ENCODE measurements at regions of chr1 and their contacts with region 1.

Region 1: GRCh38 chr1:92485381-92486257 is 1.1 kb downstream of the GFI1 start:
- DNase-seq: peak; percentile 91
- H3K4me3 Mint-ChIP-seq: peak overlapping the region; percentile 90
- H3K27ac Mint-ChIP-seq: peak overlapping the region; percentile 93
- H3K4me1 Mint-ChIP-seq: peaks cover 38% of the 10 kb centered on the region
- H3K27me3 Mint-ChIP-seq: no peaks in the 10 kb centered on the region

Region 2: DNA sequence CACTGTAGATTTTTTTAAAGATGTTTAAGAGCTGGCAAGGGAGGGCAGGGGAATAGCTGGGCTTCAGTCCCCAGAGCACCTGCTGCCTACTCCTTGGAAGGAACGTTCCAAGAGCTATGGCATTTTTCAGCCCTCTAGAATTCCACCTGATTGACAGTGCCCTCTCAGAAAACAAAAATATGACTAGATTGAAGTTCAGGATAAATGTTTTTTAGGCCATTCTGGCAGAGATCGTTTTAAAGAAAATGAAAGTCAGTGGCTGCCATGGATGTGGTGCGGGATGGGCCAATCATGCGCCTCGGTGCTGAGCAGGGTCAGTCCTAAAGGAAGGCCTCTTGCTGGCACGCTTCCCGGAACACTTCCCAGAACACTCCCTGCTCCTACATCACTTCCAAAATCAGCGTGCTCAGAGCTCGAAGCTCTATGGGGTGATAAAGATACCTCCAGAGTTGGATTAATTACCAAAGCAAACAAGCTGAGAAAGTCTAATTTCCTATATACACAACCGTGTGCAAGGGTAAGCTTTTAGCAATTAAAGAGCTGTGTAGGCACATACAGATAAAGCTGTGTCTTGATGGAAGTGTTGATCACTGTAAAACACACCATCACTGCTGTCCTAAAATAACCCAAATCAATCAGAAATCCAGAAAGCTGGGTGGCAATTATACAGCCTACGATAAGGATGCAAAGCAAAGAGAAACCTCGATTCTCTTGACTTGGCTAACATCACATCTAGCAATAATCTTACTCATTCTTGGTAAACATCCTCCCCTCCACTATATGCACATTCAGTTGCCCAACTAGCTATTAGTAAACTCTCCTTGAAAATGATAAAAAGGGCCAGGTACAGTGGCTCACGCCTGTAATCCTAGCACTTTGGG is 634.2 kb before region 1 on chr1:
- CTCF ChIA-PET with region 1: no interaction called
- intact Hi-C with region 1: no loop called
- DNase-seq: no peak
- H3K4me3 Mint-ChIP-seq: no peak overlapping the region
- H3K27ac Mint-ChIP-seq: no peak overlapping the region
- H3K4me1 Mint-ChIP-seq: peaks cover 6% of the 10 kb centered on the region
- H3K27me3 Mint-ChIP-seq: no peaks in the 10 kb centered on the region

Region 3: DNA sequence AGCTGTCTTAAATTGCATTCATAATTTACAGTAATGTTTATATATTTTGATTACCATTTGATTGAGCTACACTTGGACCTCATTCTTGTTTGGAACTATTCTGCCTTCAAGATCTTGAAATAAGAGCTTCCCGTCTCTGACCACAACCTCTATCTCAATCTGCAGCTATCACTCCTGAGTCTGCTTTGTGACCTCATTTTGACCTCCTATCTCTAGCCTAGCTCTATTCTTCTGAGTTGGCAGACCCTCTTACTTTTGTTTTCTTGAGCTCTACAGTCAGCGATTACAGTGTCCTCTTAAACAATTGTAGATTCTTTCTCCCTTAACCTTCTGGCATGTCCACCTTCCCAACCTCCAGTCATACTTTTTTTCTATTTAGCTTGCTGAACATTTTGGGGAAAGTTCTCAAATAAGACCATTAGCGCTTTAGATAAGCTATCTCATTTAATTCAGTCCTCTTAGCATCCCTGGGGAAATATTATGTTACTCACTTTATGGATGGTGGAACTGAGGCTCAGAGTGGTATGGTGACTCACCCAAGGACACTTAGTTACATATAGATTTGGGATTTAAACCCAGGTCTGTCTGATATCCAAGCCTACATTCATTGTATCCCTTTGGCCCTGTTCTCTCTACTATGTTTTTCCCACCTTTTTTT is 167.7 kb before region 1 on chr1:
- CTCF ChIA-PET with region 1: interaction called, 7 read pairs
- intact Hi-C with region 1: loop called (anchors 2 kb)
- DNase-seq: no peak
- H3K4me3 Mint-ChIP-seq: no peak overlapping the region
- H3K27ac Mint-ChIP-seq: no peak overlapping the region
- H3K4me1 Mint-ChIP-seq: peaks cover 55% of the 10 kb centered on the region
- H3K27me3 Mint-ChIP-seq: no peaks in the 10 kb centered on the region

Region 4: GRCh38 chr1:92502247-92502646 is 16.6 kb after region 1 on chr1:
- CTCF ChIA-PET with region 1: interaction called, 4 read pairs
- intact Hi-C with region 1: loop called (anchors 1 kb)
- DNase-seq: no peak
- H3K4me3 Mint-ChIP-seq: no peak overlapping the region
- H3K27ac Mint-ChIP-seq: peak overlapping the region; percentile 46
- H3K4me1 Mint-ChIP-seq: peaks cover 35% of the 10 kb centered on the region
- H3K27me3 Mint-ChIP-seq: no peaks in the 10 kb centered on the region

Region 5: DNA sequence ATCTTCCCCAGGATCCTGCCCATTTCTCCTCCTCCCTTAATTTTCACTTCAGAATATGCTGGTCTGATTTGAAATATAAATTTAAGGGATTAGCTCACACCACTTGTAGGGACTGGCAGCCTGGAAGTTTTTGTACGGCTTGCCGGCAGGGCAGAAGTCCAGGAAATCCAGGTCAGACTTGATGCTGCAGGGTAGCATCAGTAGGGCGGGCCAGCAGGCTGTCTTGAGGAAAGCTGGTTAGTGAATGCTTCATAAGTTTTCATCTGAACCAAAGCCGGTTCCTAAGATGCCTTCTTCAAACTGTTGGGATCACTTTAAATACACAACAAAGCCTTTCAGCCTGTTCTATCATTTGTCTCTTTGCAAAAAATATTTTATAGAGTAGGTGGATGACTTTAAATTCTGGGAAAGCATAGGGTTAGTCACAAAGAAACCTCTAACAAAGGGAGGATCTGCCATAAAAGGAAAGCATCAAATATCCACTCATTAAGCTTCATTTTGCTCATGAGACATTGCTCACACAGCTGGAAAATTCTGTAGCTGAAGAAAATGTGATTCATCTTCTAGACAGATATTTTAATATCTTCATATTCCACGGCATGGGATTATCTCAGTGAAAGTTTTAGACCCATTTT is 91.8 kb after region 1 on chr1:
- CTCF ChIA-PET with region 1: interaction called, 16 read pairs
- intact Hi-C with region 1: loop called (anchors 1 kb)
- DNase-seq: no peak
- H3K4me3 Mint-ChIP-seq: peak overlapping the region; percentile 92
- H3K27ac Mint-ChIP-seq: peak overlapping the region; percentile 97
- H3K4me1 Mint-ChIP-seq: peaks cover 62% of the 10 kb centered on the region
- H3K27me3 Mint-ChIP-seq: no peaks in the 10 kb centered on the region

Region 6: DNA sequence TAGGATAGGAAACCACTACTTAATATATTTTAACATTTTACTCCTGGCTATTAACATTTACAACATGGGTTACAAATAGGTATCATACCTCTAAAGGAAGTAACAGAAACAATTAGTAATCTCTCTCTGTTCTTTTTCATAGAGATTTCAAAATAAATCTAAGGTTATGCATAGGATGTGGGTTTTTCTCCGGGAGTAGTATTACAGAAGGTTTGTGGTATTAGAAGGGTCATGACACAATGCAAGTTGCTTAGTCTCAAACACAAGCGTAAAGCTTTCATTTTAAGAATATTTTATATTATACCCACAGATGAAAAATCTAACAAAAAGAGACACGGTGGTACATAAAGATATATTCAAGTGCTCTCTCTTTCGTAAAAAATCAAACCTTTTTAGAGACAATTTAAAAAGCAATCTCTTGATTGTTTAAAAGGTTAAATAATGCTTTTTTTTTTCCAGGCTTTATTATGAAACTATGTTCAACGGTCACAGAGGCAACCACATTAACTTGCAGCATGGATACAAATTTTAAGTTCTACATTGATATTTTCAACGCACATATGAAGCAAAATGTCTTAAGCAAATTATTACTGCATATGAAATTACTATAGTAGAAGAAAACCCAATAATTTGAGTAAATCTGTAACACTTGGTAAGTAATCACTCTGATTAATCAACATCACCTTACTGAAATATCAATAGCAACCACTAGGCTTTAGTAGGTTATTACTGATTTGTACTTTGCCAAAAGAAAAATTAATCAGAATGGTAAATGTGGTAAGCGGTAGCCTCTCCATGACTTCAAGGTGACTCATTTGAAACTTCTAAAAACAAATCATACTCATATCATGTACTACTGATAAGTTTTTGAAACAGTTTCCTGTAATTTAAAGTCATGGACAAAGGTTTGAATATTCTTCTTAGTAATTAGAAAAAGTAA is 98.5 kb after region 1 on chr1:
- CTCF ChIA-PET with region 1: interaction called, 16 read pairs
- intact Hi-C with region 1: loop called (anchors 1 kb)
- DNase-seq: no peak
- H3K4me3 Mint-ChIP-seq: peak overlapping the region; percentile 45
- H3K27ac Mint-ChIP-seq: peak overlapping the region; percentile 88
- H3K4me1 Mint-ChIP-seq: peaks cover 72% of the 10 kb centered on the region
- H3K27me3 Mint-ChIP-seq: no peaks in the 10 kb centered on the region

Region 7: DNA sequence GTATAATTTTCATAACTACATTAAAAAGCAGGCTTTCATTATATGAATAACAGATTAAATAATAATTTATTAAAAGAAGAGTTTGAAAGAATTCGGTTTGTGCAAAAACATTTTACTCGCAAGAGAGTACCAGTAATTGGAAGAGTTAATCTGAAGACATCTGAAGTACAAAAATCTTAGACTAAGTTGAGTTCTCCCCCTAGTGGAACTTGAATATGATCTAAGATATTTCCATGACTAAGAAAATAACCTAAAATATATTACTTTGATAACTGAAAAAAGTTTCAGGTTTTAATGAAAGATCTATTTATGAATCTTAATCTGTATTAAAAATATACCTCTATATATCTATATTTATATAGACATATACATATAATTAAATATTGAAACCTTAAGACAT is 113.6 kb after region 1 on chr1:
- CTCF ChIA-PET with region 1: interaction called, 19 read pairs
- intact Hi-C with region 1: loop called (anchors 1 kb)
- DNase-seq: no peak
- H3K4me3 Mint-ChIP-seq: no peak overlapping the region
- H3K27ac Mint-ChIP-seq: no peak overlapping the region
- H3K4me1 Mint-ChIP-seq: peaks cover 32% of the 10 kb centered on the region
- H3K27me3 Mint-ChIP-seq: no peaks in the 10 kb centered on the region

Region 8: GRCh38 chr1:93909146-93910050 is 1423.8 kb after region 1 on chr1 and contains the start of gene GCLM:
- CTCF ChIA-PET with region 1: no interaction called
- intact Hi-C with region 1: loop called (anchors 10 kb)
- DNase-seq: peak; percentile 88
- H3K4me3 Mint-ChIP-seq: peak within 1 kb of the TSS; percentile 82
- H3K27ac Mint-ChIP-seq: peak within 1 kb of the TSS; percentile 87
- H3K4me1 Mint-ChIP-seq: peaks cover 27% of the 10 kb centered on the region
- H3K27me3 Mint-ChIP-seq: no peaks in the 10 kb centered on the region
- total RNA-seq, gene GCLM: 19.5 to 22.7 TPM